ENCODE measurements at regions of chr1 and their contacts with region 1.

Region 1: GRCh38 chr1:209095627-209096595 is 487.6 kb upstream of the CAMK1G start:
- DNase-seq: no peak

Region 2: DNA sequence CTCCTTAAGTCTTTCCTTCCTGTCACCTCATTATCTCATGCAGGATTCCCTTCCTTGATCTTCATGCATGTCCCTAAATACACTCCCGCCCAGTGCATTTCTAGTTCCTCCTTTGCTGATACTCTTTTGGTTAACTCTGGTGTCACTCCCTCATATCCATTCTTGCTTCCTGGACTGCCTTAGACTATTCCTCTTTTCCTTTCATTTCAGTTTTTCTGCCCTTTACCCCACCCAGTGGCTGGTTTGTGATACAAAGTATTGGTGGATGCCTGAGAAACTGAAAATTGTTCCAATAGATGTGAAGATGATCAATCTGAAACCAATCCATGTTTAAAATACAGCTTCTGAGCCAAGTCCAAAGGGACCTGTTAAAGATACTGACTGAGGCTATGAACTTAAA is 66.2 kb before region 1 on chr1:
- intact Hi-C with region 1: no loop called
- DNase-seq: no peak

Region 3: DNA sequence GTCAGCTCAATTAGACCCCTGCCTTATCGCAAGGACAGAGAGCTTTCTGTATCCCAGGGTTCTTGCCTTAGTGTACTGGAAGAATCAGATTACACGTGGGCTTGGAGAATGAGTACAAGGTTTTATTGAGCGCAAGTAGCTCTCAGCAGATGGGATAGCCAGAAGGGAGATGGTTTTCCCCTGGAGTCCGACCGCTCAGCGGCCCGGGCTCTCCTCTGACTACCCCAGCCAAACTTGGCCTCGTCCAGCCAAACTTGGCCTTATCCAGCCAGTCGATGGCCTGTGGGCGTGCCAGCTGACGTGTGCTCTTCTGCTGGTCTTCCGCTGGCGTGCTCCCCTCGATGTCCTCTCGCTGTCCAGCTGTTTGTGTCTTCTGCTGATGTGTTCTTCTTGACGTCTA is 979.0 kb after region 1 on chr1:
- intact Hi-C with region 1: loop called in 1 of 2 experiments (anchors 5 kb)
- DNase-seq: no peak